Natural killer cell (primary cell): ENCODE measurements at regions of chr5 and their contacts with region 1.

Region 1: DNA sequence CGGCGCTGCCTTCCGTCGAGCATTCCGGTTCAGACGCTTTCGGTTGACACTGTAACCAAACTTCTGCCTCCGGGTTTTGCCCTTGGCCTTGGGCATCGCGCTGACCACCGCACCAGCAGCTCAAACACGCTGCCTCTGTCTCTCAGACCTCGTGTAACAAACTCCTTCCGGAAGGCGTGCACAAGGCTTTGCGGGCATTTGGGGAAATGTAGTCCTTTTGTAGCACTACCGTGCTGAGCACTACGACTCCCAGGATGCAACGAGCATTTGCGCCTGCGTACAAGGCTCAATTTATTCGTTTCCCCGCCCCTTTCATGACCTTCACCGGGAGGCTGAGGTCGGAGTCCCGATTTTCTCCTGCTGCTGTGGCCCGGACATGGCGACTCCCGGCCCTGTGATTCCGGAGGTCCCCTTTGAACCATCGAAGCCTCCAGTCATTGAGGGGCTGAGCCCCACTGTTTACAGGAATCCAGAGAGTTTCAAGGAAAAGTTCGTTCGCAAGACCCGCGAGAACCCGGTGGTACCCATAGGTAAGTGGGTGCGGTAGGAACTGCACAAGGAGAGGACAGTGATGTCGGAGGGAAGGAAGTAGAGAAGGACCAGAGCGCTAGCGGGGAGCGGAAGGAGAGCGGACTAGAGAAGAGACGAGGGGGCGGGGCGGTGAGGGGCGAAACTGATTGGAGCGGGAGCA is at the starts of genes HIGD2A and NOP16:
- DNase-seq: peak; percentile 95 to 99
- ATAC-seq: peak; percentile 87 to 97 (median 89)
- H3K4me3 ChIP-seq: peak within 1 kb of the TSS; percentile 93
- H3K4me3 Mint-ChIP-seq: peak within 1 kb of the TSS; percentile 99
- H3K27ac ChIP-seq: peak within 1 kb of the TSS; percentile 97
- H3K27ac Mint-ChIP-seq: peak within 1 kb of the TSS; percentile 90 to 100
- H3K4me1 ChIP-seq: peaks cover 20% of the 10 kb centered on the region
- H3K4me1 Mint-ChIP-seq: peaks cover 34 to 36% of the 10 kb centered on the region in 2 donors
- H3K27me3 ChIP-seq: no peaks in the 10 kb centered on the region
- H3K27me3 Mint-ChIP-seq: no peaks in the 10 kb centered on the region
- CTCF ChIP-seq: no peak
- total RNA-seq, gene HIGD2A: 83.5 to 90.2 (median 86.2) TPM
- total RNA-seq, gene NOP16: 6.4 to 12.4 (median 12.1) TPM

Region 2: DNA sequence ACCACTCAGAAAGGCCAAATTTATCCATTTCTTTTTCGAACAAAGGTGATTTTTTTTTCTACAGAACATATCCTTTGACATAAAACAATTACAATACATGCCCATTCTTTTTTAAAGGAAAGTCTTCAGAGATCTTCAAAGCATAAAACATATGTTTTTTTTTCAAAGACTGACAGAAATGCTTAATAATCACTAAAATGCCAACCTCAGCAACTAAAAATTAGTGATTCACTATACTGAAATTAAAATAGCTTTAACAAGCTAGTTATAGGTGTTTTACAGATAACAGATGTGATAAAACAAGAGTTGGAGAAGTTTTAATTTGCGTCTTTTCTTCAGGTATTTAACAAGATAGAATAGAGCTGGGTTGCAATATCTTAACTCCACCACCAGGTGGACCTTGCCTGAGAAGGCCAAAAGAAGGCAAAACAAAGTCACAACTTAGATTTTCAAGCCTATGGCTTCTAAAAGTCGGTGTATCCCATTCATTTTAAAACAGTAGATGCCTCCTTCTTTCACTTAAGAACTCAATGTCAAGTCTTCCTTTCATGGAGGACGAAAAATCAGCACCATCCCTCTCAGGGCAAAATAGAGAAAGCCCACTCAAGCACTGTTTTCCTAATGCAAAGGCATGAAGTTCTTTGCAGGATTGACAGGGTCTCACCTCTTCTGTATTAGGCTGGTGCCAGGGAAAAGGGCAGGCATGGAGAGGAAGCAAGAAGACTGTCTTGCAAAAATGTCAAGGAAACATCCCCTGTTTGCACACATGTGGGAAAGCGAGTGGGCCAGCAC is 548.3 kb before region 1 on chr5:
- intact Hi-C with region 1: no loop called
- DNase-seq: peak in 1 of 2 donors; percentile 58
- ATAC-seq: peak in 2 of 3 donors; percentile 49 to 64
- H3K4me3 ChIP-seq: no peak overlapping the region
- H3K4me3 Mint-ChIP-seq: no peak overlapping the region
- H3K27ac ChIP-seq: no peak overlapping the region
- H3K27ac Mint-ChIP-seq: no peak overlapping the region
- H3K4me1 ChIP-seq: no peaks in the 10 kb centered on the region
- H3K4me1 Mint-ChIP-seq: no peaks in the 10 kb centered on the region
- H3K27me3 ChIP-seq: no peaks in the 10 kb centered on the region
- H3K27me3 Mint-ChIP-seq: peaks cover 0 to 10% of the 10 kb centered on the region in 2 donors
- CTCF ChIP-seq: peak; percentile 84

Region 3: DNA sequence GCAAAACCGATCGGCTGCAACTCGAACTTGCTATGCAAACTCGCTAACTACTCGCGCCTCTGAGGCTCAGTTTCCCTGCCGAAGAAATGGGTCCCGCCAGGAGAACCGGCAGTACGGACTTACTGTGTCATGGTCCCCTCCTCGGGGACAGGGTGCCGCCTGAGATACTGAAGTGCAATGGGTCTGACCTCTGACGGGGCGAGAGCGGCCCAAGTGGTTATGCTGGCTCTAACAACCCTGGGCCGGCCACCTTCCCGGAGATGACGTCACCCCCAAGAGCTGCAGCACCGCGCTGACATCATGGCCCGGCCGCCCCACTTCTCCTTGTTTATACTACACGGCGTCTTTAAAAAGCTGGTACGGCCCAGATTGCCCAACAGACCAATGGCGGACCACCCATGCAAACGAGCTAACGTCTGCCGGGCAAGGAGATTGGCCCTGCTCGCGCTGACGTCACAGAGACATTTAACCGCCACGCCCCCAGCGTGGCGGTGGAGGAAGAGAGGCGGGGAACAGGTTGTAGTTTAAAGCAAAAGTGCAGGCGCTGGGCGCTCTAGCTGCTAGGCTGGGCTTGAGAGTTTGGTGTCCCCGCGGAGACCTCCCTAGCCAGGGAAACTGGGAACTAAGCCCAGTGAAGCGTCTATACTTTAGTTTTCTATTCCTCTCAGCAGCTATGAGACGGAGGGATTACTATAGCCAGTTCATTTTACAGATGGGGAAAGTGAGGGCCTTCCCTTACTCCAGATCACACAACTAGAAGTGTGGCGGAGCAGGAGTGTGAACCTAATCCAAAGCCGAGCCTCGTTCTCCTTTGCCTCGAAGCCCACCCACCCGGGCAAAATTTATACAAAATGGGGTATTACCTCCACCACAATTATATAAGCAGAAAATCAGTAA is 149.3 kb after region 1 on chr5:
- intact Hi-C with region 1: loop called (anchors 2 kb)
- DNase-seq: peak; percentile 93 to 99
- ATAC-seq: peak; percentile 67 to 87 (median 73)
- H3K4me3 ChIP-seq: peak overlapping the region; percentile 98
- H3K4me3 Mint-ChIP-seq: peak overlapping the region; percentile 97
- H3K27ac ChIP-seq: peak overlapping the region; percentile 100
- H3K27ac Mint-ChIP-seq: peak overlapping the region; percentile 99 to 100
- H3K4me1 ChIP-seq: peaks cover 73% of the 10 kb centered on the region
- H3K4me1 Mint-ChIP-seq: peaks cover 84 to 85% of the 10 kb centered on the region in 2 donors
- H3K27me3 ChIP-seq: no peaks in the 10 kb centered on the region
- H3K27me3 Mint-ChIP-seq: no peaks in the 10 kb centered on the region
- CTCF ChIP-seq: no peak